ENCODE measurements at regions of chr3 and their contacts with region 1.

Region 1: GRCh38 chr3:53709860-53710674 is 136.2 kb downstream of the CHDH start:
- DNase-seq: peak; percentile 74
- CTCF ChIP-seq: peak; percentile 79

Region 2: DNA sequence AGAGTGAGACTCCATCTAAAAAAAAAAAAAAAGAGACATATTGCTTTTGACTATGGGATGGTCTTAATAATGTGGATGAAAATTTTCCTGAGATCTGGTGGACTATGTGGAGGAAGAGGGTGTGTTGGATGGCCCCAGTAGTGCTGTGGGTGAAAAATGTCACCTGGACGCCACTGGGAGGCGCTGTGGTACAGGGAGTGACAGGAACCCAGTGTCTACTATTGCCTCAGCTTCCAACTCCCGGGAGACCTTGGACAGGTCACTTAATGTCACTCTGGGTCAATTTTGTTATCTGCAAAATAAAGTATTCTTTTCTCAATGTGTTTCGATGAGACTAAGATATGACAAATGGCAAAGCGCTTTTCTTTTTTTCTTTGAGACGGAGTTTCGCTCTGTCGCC is 335.0 kb before region 1 on chr3:
- CTCF ChIA-PET with region 1: interaction called, 41 read pairs
- POLR2A ChIA-PET with region 1: no interaction called
- DNase-seq: peak; percentile 71
- CTCF ChIP-seq: peak; percentile 75

Region 3: DNA sequence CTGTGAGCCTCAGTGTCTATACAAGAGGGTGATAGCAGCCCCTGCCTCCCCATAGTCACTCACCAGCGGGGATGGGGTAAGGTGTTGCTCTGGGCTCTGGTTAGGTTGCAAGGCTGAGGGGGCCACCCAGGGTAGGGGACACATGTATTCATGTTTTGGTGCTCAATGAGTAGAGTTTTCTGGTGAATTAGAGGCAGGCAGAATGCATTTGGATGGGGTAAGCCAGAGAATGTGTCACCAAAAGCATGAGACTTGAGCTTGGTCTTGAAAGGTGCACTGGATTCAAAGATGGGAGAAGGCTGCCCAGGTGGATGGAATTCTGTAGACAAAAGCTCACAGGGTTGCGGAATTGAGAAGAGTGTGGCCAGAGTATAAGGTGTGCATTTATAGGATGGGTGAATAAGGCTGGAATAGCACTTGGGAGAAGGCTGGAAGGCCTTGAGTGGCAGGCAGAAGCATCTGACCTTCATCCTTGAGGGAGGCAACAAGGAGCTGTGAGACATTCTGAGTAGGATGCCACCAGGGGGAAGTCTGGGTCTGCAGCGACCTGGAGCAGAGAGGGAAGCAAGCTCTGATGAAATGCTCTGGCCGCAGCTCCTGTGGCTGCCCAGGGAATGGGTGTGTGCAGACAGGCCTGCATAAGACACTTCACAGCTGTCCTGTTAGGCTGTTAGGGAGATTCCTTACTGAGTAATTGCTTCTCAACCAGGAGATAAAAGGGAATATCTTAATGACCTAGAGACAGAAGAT is 13.5 kb before region 1 on chr3:
- CTCF ChIA-PET with region 1: interaction called, 50 read pairs
- POLR2A ChIA-PET with region 1: no interaction called
- DNase-seq: no peak
- CTCF ChIP-seq: no peak

Region 4: DNA sequence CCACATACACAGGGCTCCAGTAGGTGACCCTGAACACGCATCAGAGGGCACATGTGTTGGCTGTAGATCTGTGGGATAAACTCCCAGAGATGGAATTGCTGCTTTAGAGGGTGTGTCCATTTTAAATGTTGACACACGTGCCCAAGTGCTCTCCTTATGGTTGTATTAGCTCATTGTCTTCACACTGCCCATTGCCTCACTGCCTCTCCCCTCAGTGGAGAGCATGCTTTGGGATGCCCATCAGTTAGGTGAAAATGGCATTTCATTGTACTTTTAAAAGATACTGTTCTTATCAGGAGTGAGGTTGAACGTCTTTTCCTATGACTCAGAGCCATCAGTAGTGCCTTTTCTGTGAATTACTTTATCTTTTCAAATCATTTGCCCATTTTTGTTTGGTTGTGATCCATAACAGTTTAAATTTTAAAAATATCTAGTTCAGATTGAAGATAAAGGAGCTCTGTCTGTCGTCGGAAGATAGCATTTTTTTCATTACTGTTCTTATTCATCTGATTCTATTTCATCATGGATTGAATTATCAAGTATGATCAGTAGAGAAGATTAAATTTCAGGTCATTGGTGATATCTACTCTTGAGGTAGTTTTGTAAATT is 15.4 kb after region 1 on chr3:
- CTCF ChIA-PET with region 1: interaction called, 20 read pairs
- POLR2A ChIA-PET with region 1: interaction called, 3 read pairs
- DNase-seq: no peak
- CTCF ChIP-seq: no peak

Region 5: DNA sequence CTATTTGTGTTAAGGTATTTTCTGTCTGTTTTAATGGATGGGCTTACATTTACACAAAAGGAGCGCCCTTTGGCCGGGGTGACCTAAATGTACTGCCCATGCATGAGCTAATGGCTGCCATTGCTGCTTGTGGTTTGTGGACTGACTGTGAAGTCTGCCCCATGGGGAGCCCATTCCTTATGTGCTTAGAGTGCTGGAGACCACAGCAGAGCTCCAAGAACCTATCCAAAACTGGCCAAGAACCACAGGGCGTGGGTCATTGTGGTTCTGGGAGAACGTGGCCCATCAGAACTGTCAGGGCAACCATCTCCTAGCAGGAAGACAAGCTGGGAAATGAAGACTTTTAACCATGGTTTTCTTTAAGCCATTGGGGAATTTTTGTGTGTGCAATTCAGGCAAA is 30.9 kb after region 1 on chr3:
- CTCF ChIA-PET with region 1: interaction called, 12 read pairs
- POLR2A ChIA-PET with region 1: no interaction called
- DNase-seq: no peak
- CTCF ChIP-seq: no peak

Region 6: GRCh38 chr3:53841296-53841695 is 131.2 kb after region 1 on chr3:
- CTCF ChIA-PET with region 1: no interaction called
- POLR2A ChIA-PET with region 1: no interaction called
- DNase-seq: no peak
- CTCF ChIP-seq: no peak

Measured in GM10248 (cell line).